PC-3 (cell line): ENCODE measurements at regions of chr9 and their contacts with region 1.

Region 1: GRCh38 chr9:128684279-128685021 is 4.6 kb upstream of the SET start:
- DNase-seq: peak; percentile 86
- ATAC-seq: peak; percentile 70
- H3K4me3 ChIP-seq: peak overlapping the region; percentile 92
- H3K27ac ChIP-seq: peak overlapping the region; percentile 95
- H3K4me1 ChIP-seq: peaks cover 41% of the 10 kb centered on the region
- H3K27me3 ChIP-seq: no peaks in the 10 kb centered on the region
- CTCF ChIP-seq: no peak

Region 2: GRCh38 chr9:128552153-128552743 is 132.2 kb before region 1 on chr9 and contains the start of gene SPTAN1:
- CTCF ChIA-PET with region 1: no interaction called
- POLR2A ChIA-PET with region 1: interaction called, 10 read pairs
- intact Hi-C with region 1: no loop called
- DNase-seq: peak; percentile 85
- ATAC-seq: peak; percentile 67
- H3K4me3 ChIP-seq: peak within 1 kb of the TSS; percentile 90
- H3K27ac ChIP-seq: peak within 1 kb of the TSS; percentile 20
- H3K4me1 ChIP-seq: peaks cover 43% of the 10 kb centered on the region
- H3K27me3 ChIP-seq: no peaks in the 10 kb centered on the region
- CTCF ChIP-seq: no peak
- total RNA-seq, gene SPTAN1: 221 and 251 TPM in 2 replicates

Region 3: GRCh38 chr9:128635283-128636023 is 49.0 kb before region 1 on chr9:
- CTCF ChIA-PET with region 1: no interaction called
- POLR2A ChIA-PET with region 1: interaction called, 5 read pairs
- intact Hi-C with region 1: loop called (anchors 5 kb)
- DNase-seq: peak; percentile 97
- ATAC-seq: peak; percentile 84
- H3K4me3 ChIP-seq: peak overlapping the region; percentile 43; the same call in 1 of the 2 replicates
- H3K27ac ChIP-seq: peak overlapping the region; percentile 97
- H3K4me1 ChIP-seq: peaks cover 23% of the 10 kb centered on the region
- H3K27me3 ChIP-seq: no peaks in the 10 kb centered on the region
- CTCF ChIP-seq: peak; percentile 74

Region 4: DNA sequence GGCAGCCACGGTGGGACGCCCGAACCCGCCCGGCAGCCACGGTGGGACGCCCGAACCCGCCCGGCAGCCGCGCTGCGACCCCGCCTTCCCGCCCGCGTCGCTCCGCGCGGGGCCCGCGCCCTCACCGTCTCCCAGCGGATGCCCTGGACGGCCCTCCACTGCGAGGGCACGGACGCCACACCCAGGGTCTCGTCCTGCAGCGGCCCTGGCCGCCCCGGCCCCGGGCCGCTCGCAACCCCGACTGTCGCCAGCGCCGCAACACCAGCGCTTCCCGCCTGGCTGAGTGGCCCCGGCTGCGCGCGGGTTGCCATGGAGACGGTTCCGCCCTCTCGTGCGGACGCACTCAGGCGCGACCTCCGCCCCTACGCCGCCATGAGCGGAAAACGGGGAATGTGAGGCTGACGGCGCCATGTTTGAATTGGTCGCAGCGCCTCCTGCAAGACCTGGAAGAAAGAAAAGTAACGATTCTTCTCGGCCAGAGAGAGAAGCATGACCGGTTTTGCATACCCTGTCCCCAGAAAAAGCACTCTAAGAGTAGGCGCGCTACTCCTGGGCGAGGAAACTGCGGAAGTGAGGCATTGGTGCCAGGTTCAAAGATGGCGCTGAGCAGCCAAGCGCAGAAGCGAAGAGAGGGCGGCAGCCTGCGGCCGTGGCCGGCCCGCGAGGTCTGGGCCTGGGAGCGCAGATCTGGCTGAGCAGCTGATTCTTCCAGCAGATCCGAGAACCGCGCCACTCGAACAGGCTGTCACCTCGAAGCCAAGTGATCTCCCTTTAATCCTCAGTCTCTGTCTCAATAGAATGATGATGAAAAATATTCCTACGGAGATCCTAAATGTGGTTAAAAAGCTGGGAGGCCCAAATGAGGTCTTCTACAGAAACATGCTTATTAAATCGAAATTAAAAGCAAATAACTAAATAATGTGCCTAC is 27.8 kb before region 1 on chr9 and contains the start of gene DYNC2I2:
- CTCF ChIA-PET with region 1: no interaction called
- POLR2A ChIA-PET with region 1: no interaction called
- intact Hi-C with region 1: loop called (anchors 2 kb)
- DNase-seq: peak; percentile 91
- ATAC-seq: peak; percentile 94
- H3K4me3 ChIP-seq: peak within 1 kb of the TSS; percentile 87
- H3K27ac ChIP-seq: peak within 1 kb of the TSS; percentile 96
- H3K4me1 ChIP-seq: peaks cover 3% of the 10 kb centered on the region
- H3K27me3 ChIP-seq: no peaks in the 10 kb centered on the region
- CTCF ChIP-seq: no peak
- total RNA-seq, gene DYNC2I2: 185 and 196 TPM in 2 replicates

Region 5: DNA sequence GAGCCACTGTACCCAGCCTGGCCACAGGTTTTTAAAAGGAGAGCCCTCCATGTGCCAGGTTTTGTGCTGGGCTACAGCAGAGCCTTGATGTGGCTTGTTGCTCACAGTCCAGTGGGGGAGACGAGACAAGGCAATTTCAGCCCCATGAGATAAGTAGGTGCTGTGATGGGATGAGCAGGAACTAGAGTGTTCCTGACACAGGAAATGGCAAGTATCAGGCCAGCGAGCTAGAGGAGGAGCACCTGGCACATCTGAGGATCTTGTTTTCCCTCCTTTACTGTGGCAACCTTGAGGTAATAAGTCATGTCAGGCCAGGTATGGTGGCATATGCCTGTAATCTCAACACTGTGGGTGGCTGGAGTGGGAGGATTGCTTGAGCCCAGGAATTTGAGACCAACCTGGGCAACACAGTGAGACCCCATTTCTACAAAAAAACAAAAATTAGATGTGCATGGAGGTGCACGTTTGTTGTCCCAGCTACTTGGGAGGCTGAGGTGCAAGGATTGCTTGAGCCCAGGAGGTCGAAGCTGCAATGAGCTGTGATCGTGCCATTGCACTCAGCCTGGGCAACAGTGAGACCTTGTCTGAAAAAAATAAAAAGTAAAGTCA is 43.3 kb after region 1 on chr9:
- CTCF ChIA-PET with region 1: no interaction called
- POLR2A ChIA-PET with region 1: no interaction called
- intact Hi-C with region 1: no loop called
- DNase-seq: no peak
- ATAC-seq: no peak
- H3K4me3 ChIP-seq: no peak overlapping the region
- H3K27ac ChIP-seq: no peak overlapping the region
- H3K4me1 ChIP-seq: no peaks in the 10 kb centered on the region
- H3K27me3 ChIP-seq: no peaks in the 10 kb centered on the region
- CTCF ChIP-seq: no peak